ENCODE measurements at regions of chr10 and their contacts with region 1.

Region 1: GRCh38 chr10:119030421-119031250 is 1.1 kb downstream of the NANOS1 start:
- DNase-seq: peak; percentile 68
- ATAC-seq: peak; percentile 19
- H3K4me3 Mint-ChIP-seq: peak overlapping the region; percentile 68
- H3K27ac Mint-ChIP-seq: no peak overlapping the region
- H3K4me1 Mint-ChIP-seq: peaks cover 27% of the 10 kb centered on the region
- H3K27me3 Mint-ChIP-seq: peaks cover 6% of the 10 kb centered on the region
- CTCF ChIP-seq: no peak

Region 2: GRCh38 chr10:118983263-118983662 is 47.4 kb before region 1 on chr10:
- CTCF ChIA-PET with region 1: interaction called, 10 read pairs
- POLR2A ChIA-PET with region 1: no interaction called
- DNase-seq: no peak
- ATAC-seq: no peak; the same call in 1 of the 2 replicates
- H3K4me3 Mint-ChIP-seq: no peak overlapping the region
- H3K27ac Mint-ChIP-seq: no peak overlapping the region
- H3K4me1 Mint-ChIP-seq: peaks cover 6% of the 10 kb centered on the region
- H3K27me3 Mint-ChIP-seq: no peaks in the 10 kb centered on the region
- CTCF ChIP-seq: no peak

Region 3: GRCh38 chr10:118998183-118998582 is 32.5 kb before region 1 on chr10:
- CTCF ChIA-PET with region 1: no interaction called
- POLR2A ChIA-PET with region 1: no interaction called
- DNase-seq: no peak
- ATAC-seq: no peak
- H3K4me3 Mint-ChIP-seq: no peak overlapping the region
- H3K27ac Mint-ChIP-seq: no peak overlapping the region
- H3K4me1 Mint-ChIP-seq: no peaks in the 10 kb centered on the region
- H3K27me3 Mint-ChIP-seq: peaks cover 2% of the 10 kb centered on the region; the same call in 1 of the 2 replicates
- CTCF ChIP-seq: no peak

Region 4: GRCh38 chr10:119161680-119162079 is 131.0 kb after region 1 on chr10:
- CTCF ChIA-PET with region 1: no interaction called
- POLR2A ChIA-PET with region 1: no interaction called
- DNase-seq: no peak
- ATAC-seq: no peak
- H3K4me3 Mint-ChIP-seq: no peak overlapping the region
- H3K27ac Mint-ChIP-seq: no peak overlapping the region
- H3K4me1 Mint-ChIP-seq: peaks cover 14% of the 10 kb centered on the region
- H3K27me3 Mint-ChIP-seq: no peaks in the 10 kb centered on the region
- CTCF ChIP-seq: no peak